GM12878 (cell line): ENCODE measurements at regions of chr3 and their contacts with region 1.

Region 1: GRCh38 chr3:112642912-112643506 is 2.1 kb upstream of the CCDC80 start:
- DNase-seq: peak; percentile 46
- ATAC-seq: peak; percentile 99
- H3K4me3 ChIP-seq: no peak overlapping the region
- H3K27ac ChIP-seq: no peak overlapping the region
- H3K4me1 ChIP-seq: peaks cover 15% of the 10 kb centered on the region
- H3K27me3 ChIP-seq: peaks cover 0 to 8% of the 10 kb centered on the region in 2 experiments; a peak in 3 of 4 replicates
- CTCF ChIP-seq: peak; percentile 86 to 96 (median 93)
- EP300 ChIP-seq: no peak
- POLR2A ChIP-seq: no peak
- RAD21 ChIP-seq: peak; percentile 85

Region 2: GRCh38 chr3:112561731-112562688 is 81.0 kb before region 1 on chr3 and contains the starts of genes ATG3 and SLC35A5:
- CTCF ChIA-PET with region 1: no interaction called
- POLR2A ChIA-PET with region 1: no interaction called
- RAD21 ChIA-PET with region 1: no interaction called
- SMC1A ChIA-PET with region 1: no interaction called
- in situ Hi-C with region 1: no loop called
- intact Hi-C with region 1: no loop called
- DNase-seq: peak; percentile 96
- ATAC-seq: peak; percentile 88
- H3K4me3 ChIP-seq: peak within 1 kb of the TSS; percentile 81
- H3K27ac ChIP-seq: peak within 1 kb of the TSS; percentile 92
- H3K4me1 ChIP-seq: peaks cover 4% of the 10 kb centered on the region; the same call in 1 of the 2 replicates
- H3K27me3 ChIP-seq: no peaks in the 10 kb centered on the region
- CTCF ChIP-seq: 0 out of 6 replicates have a peak, but pooled peaks of 2 of the 3 experiments have one; percentile 0 to 9
- EP300 ChIP-seq: peak; percentile 42 to 57; a peak in 1 of 4 replicates
- POLR2A ChIP-seq: peak; percentile 89
- RAD21 ChIP-seq: no peak
- polyA plus RNA-seq, gene ATG3: 49.8 to 71.2 TPM
- polyA plus RNA-seq, gene SLC35A5: 10.9 to 15.7 TPM

Region 3: DNA sequence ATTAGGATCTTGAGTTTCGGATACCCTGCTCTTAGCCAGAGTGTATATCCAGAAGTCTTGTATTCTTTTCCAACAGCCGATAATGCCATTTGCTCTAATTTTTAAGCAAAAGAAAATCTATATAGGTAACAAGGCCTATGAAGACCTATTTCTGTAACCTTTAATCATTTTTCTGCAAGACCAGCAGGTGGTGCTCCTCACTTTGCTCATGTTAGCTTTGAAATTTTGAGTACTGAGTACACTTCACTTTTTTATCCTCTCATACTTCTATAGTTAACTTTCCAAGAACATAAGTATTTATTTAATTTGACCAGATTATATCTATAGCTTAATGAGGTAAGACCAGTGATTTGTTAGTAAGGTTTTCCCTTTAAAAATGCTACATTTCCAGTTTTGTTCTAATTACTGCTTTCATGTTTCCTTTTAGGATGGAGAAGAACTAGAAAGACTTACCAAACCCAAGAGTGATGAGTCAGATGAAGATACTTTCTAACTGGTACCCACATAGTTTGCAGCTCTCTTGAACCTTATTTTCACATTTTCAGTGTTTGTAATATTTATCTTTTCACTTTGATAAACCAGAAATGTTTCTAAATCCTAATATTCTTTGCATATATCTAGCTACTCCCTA is 60.6 kb before region 1 on chr3:
- CTCF ChIA-PET with region 1: interaction called, 32 read pairs
- POLR2A ChIA-PET with region 1: no interaction called
- RAD21 ChIA-PET with region 1: interaction called, 4 read pairs
- SMC1A ChIA-PET with region 1: interaction called, 7 read pairs
- in situ Hi-C with region 1: no loop called
- intact Hi-C with region 1: no loop called
- DNase-seq: no peak
- ATAC-seq: peak; percentile 71
- H3K4me3 ChIP-seq: no peak overlapping the region
- H3K27ac ChIP-seq: no peak overlapping the region
- H3K4me1 ChIP-seq: no peaks in the 10 kb centered on the region
- H3K27me3 ChIP-seq: no peaks in the 10 kb centered on the region
- CTCF ChIP-seq: peak; percentile 55 to 63 (median 60)
- EP300 ChIP-seq: no peak
- POLR2A ChIP-seq: no peak
- RAD21 ChIP-seq: peak; percentile 72

Region 4: GRCh38 chr3:112653209-112653871 is 10.3 kb after region 1 on chr3:
- CTCF ChIA-PET with region 1: interaction called, 28 read pairs
- POLR2A ChIA-PET with region 1: no interaction called
- RAD21 ChIA-PET with region 1: interaction called, 3 read pairs
- SMC1A ChIA-PET with region 1: interaction called, 3 read pairs
- in situ Hi-C with region 1: no loop called
- intact Hi-C with region 1: no loop called
- DNase-seq: no peak
- ATAC-seq: no peak
- H3K4me3 ChIP-seq: no peak overlapping the region
- H3K27ac ChIP-seq: no peak overlapping the region
- H3K4me1 ChIP-seq: no peaks in the 10 kb centered on the region
- H3K27me3 ChIP-seq: no peaks in the 10 kb centered on the region; a peak in 2 of 4 replicates
- CTCF ChIP-seq: no peak
- EP300 ChIP-seq: no peak
- POLR2A ChIP-seq: no peak
- RAD21 ChIP-seq: no peak

Region 5: DNA sequence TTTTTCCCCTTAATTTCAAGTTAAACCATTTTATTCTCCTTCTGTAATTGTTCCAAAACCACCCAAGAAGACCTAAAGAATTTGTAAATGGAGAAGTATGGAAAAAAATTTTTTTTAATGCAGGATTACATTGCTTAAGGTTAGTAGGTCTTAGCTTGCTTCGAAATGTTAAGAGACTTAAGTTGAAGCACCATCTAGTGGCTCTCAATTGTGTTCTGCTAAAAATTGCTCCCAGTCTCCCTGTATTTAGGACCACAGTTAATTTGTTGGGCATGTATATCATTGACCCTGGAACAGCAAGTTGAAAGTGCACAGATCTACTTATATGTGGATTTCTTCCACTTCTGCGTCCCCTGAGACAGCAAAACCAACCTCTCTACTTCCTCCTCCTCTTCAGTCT is 171.3 kb after region 1 on chr3:
- CTCF ChIA-PET with region 1: interaction called, 9 read pairs
- POLR2A ChIA-PET with region 1: no interaction called
- RAD21 ChIA-PET with region 1: interaction called, 11 read pairs
- SMC1A ChIA-PET with region 1: interaction called, 8 read pairs
- in situ Hi-C with region 1: no loop called
- intact Hi-C with region 1: no loop called
- DNase-seq: no peak
- ATAC-seq: peak; percentile 29; the same call in 1 of the 3 replicates
- H3K4me3 ChIP-seq: no peak overlapping the region
- H3K27ac ChIP-seq: no peak overlapping the region
- H3K4me1 ChIP-seq: peaks cover 19% of the 10 kb centered on the region
- H3K27me3 ChIP-seq: no peaks in the 10 kb centered on the region
- CTCF ChIP-seq: peak; percentile 1 to 12 (median 10); a peak in 1 of 6 replicates
- EP300 ChIP-seq: no peak
- POLR2A ChIP-seq: no peak
- RAD21 ChIP-seq: peak; percentile 40

Region 6: GRCh38 chr3:112979240-112979832 is 336.3 kb after region 1 on chr3:
- CTCF ChIA-PET with region 1: interaction called, 92 read pairs
- POLR2A ChIA-PET with region 1: interaction called, 4 read pairs
- RAD21 ChIA-PET with region 1: interaction called, 48 read pairs
- SMC1A ChIA-PET with region 1: interaction called, 61 read pairs
- in situ Hi-C with region 1: loop called (anchors 5 kb)
- intact Hi-C with region 1: loop called (anchors 1 kb)
- DNase-seq: no peak
- ATAC-seq: peak; percentile 51
- H3K4me3 ChIP-seq: no peak overlapping the region
- H3K27ac ChIP-seq: no peak overlapping the region
- H3K4me1 ChIP-seq: peaks cover 25% of the 10 kb centered on the region
- H3K27me3 ChIP-seq: no peaks in the 10 kb centered on the region
- CTCF ChIP-seq: peak; percentile 35 to 62 (median 49); a peak in 4 of 6 replicates
- EP300 ChIP-seq: no peak
- POLR2A ChIP-seq: no peak
- RAD21 ChIP-seq: peak; percentile 74

Region 7: DNA sequence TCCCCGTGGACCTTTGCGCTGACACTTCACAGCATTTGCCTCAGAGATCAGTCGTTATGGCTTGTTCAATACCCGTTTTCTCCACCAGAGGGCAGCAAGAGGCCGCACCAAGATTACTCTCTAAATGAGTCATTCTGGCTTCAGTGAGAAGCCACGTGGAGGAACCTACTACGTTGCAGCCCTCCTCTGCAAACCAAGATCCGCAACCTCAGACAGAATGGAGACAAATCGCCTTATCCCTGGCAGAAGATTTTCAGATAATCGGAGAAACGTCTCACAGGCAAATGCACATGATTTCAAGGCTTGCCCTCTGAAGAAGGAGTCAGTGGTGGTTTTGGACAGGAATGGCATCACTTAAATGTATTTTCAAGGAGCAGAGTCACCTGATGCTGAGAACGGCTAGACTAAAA is 408.3 kb after region 1 on chr3:
- CTCF ChIA-PET with region 1: no interaction called
- POLR2A ChIA-PET with region 1: no interaction called
- RAD21 ChIA-PET with region 1: no interaction called
- SMC1A ChIA-PET with region 1: interaction called, 5 read pairs
- in situ Hi-C with region 1: no loop called
- intact Hi-C with region 1: loop called (anchors 1 kb)
- DNase-seq: peak; percentile 63
- ATAC-seq: peak; percentile 99
- H3K4me3 ChIP-seq: no peak overlapping the region
- H3K27ac ChIP-seq: no peak overlapping the region
- H3K4me1 ChIP-seq: peaks cover 3% of the 10 kb centered on the region
- H3K27me3 ChIP-seq: no peaks in the 10 kb centered on the region
- CTCF ChIP-seq: peak; percentile 85 to 93 (median 93); a peak in 5 of 6 replicates
- EP300 ChIP-seq: peak; percentile 33 to 45; a peak in 1 of 4 replicates
- POLR2A ChIP-seq: no peak
- RAD21 ChIP-seq: peak; percentile 93